HEK293T (cell line): ENCODE measurements at regions of chr14 and their contacts with region 1.

Region 1: GRCh38 chr14:72516936-72517700 is 376.8 kb downstream of the DPF3 start:
- DNase-seq: peak; percentile 61

Region 2: GRCh38 chr14:72503696-72504368 is 13.3 kb before region 1 on chr14:
- CTCF ChIA-PET with region 1: interaction called, 11 read pairs
- POLR2A ChIA-PET with region 1: no interaction called
- DNase-seq: no peak

Region 3: GRCh38 chr14:72565149-72565559 is 48.0 kb after region 1 on chr14:
- CTCF ChIA-PET with region 1: no interaction called
- POLR2A ChIA-PET with region 1: no interaction called
- DNase-seq: no peak

Region 4: GRCh38 chr14:72666610-72667009 is 149.5 kb after region 1 on chr14:
- CTCF ChIA-PET with region 1: no interaction called
- POLR2A ChIA-PET with region 1: no interaction called
- DNase-seq: no peak

Region 5: DNA sequence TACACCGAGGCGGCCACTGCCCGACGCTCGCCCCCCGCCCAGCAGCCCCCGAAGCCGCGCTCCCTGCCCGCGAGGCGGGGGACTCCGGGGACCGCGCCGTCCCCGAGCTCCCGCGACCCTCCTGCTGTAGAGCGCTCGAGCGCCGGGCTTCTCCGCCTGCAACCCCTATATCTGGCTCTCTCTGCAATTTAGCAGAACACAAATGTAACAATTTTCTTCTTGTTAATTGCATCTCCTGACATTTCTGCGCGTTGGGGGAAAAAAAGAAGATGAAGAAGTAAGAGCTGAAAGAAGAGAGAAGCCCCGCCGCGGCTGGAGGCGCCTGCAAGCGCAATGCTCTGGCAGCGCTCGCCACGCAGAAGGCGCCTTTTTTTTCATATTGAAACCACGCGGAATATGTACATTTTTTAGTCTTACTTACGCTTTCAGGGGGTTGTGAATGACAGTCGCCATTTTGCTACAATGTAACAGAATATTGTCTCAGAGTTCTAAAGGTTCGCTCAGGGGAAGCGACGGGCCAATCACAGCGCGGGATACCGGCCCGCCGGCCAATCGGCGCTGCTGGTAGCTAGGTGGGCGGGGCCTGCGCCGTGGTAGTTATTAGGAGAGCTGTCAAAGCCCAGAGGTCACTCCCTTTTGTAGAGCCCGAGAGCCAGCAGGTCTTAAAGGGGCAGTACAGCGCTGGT is 376.7 kb after region 1 on chr14 and contains the start of gene DPF3:
- CTCF ChIA-PET with region 1: interaction called, 10 read pairs
- POLR2A ChIA-PET with region 1: no interaction called
- DNase-seq: peak; percentile 94

Region 6: DNA sequence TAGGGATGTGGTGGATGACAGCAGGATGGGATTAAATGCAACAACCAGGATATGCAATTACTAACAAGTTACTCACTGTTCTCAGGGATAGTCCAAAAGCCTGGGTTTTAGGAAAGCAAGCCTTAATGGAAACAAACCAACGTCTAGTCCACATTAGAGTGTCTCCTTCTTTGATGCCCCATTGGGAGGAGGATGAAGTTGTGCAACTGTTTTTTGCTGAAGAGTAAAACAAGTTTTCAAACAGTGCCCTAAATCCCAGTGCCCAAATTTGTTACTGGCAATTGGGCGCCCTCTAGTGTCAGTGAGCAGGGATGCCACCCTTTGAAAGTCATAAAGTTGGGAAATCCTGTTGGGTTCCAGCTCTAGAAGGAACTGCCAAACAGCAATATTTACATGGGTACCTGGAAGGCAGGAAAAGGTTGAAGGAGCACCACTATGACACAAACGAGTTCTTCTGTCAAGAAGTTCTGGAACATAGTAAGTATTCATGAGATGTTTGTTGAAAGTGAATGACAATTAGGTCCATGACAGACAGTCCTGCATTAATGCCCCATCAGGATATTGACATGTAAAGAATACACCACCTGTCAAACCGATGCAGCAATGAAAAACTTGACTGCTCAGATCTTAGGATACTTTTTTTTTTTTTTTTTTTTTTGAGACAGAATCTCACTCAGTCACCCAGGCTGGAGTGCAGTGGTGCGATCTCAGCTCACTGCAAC is 387.9 kb after region 1 on chr14:
- CTCF ChIA-PET with region 1: interaction called, 86 read pairs
- POLR2A ChIA-PET with region 1: interaction called, 7 read pairs
- DNase-seq: peak; percentile 65

Region 7: GRCh38 chr14:72926292-72927028 is 409.3 kb after region 1 on chr14 and contains the start of gene DCAF4:
- CTCF ChIA-PET with region 1: interaction called, 11 read pairs
- POLR2A ChIA-PET with region 1: no interaction called
- DNase-seq: peak; percentile 96

Region 8: DNA sequence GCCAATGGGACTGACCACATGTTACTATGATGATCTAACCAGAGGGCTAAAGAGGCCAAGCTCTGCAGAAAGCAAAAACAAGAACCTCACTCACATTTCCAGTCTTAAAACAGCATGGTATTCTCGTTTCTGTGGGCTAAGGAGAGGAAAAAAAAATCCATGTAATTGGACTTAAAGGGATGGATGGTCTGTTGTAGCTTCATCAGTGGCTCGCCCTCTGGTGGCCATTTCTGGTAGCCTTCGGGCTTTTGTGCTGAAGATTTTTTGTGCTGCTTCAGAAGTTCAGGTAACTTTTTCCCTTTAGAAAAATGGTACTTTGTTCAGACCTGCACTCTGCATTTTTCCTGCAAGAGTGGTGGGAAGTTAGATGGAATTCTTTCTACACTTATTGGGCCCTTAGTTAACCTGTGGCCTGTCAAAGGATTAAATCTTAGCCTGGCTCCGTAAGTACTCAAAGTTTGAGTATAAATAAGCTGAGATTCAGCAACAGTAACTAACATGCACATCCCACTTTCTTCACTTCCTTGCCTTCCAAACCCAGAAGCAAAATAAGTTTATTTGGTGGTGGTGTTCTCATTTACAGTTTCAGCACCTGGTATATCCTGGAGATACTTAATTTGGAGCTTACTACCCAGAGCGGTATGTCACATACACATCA is 431.5 kb after region 1 on chr14:
- CTCF ChIA-PET with region 1: interaction called, 34 read pairs
- POLR2A ChIA-PET with region 1: interaction called, 3 read pairs
- DNase-seq: peak; percentile 65